AG04450 (cell line): ENCODE measurements at regions of chr6 and their contacts with region 1.

Region 1: GRCh38 chr6:87322304-87323212 is at the start of gene SMIM8:
- DNase-seq: peak; percentile 18
- H3K4me3 ChIP-seq: peak within 1 kb of the TSS; percentile 96
- H3K27ac ChIP-seq: no peak within 1 kb of the TSS
- H3K27me3 ChIP-seq: no peaks in the 10 kb centered on the region
- CTCF ChIP-seq: peak; percentile 96
- polyA plus RNA-seq, gene SMIM8: 6.4 and 9.1 TPM in 2 replicates

Region 2: GRCh38 chr6:87115402-87116135 is 207.0 kb before region 1 on chr6:
- CTCF ChIA-PET with region 1: no interaction called
- POLR2A ChIA-PET with region 1: no interaction called
- DNase-seq: no peak
- H3K4me3 ChIP-seq: no peak overlapping the region
- H3K27ac ChIP-seq: no peak overlapping the region
- H3K27me3 ChIP-seq: no peaks in the 10 kb centered on the region
- CTCF ChIP-seq: no peak

Region 3: DNA sequence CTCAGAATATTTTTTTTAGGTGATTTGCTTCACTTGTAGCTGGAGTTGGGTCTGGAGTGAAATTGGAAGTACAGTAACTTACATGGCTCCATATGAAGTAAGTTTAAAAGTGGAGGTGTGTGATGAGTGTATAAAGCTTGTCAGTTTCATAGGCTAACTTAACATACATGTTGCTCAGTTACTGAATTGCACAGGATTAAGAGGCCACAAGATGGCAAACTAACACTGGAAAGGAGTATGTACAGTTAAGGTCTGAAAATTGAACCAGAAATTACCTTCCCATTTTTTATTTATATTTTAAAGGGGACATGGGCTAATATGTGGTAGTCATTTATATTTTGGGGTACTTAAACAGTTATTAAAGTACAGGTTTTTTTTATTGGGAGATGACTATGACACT is 45.4 kb before region 1 on chr6:
- CTCF ChIA-PET with region 1: interaction called, 12 read pairs
- POLR2A ChIA-PET with region 1: no interaction called
- DNase-seq: no peak
- H3K4me3 ChIP-seq: no peak overlapping the region
- H3K27ac ChIP-seq: no peak overlapping the region
- H3K27me3 ChIP-seq: no peaks in the 10 kb centered on the region
- CTCF ChIP-seq: peak; percentile 23

Region 4: DNA sequence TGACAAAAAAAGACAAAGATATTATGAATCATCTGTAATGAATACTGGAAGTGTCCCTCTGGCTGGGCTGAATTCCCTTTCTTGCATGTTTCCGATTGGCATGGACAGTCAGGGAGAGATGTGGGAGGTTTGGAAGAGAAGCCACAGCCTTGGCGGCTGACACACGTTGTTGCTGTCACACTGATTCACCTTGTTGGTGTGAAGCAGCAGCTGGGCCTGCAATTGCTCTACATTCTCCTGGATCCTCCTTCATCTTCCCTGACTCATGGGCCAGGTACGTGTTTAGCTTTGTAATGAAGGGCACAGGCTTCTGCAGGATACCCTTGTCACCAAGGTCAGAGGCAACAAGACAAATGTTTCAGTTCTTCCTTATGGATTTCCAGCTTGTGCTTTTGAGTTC is 13.6 kb before region 1 on chr6:
- CTCF ChIA-PET with region 1: interaction called, 33 read pairs
- POLR2A ChIA-PET with region 1: no interaction called
- DNase-seq: no peak
- H3K4me3 ChIP-seq: no peak overlapping the region
- H3K27ac ChIP-seq: no peak overlapping the region
- H3K27me3 ChIP-seq: peaks cover 3% of the 10 kb centered on the region
- CTCF ChIP-seq: no peak

Region 5: GRCh38 chr6:87333591-87334181 is 11.1 kb after region 1 on chr6:
- CTCF ChIA-PET with region 1: interaction called, 17 read pairs
- POLR2A ChIA-PET with region 1: no interaction called
- DNase-seq: no peak
- H3K4me3 ChIP-seq: no peak overlapping the region
- H3K27ac ChIP-seq: no peak overlapping the region
- H3K27me3 ChIP-seq: no peaks in the 10 kb centered on the region
- CTCF ChIP-seq: no peak

Region 6: GRCh38 chr6:87341899-87342298 is 19.3 kb after region 1 on chr6:
- CTCF ChIA-PET with region 1: interaction called, 12 read pairs
- POLR2A ChIA-PET with region 1: no interaction called
- DNase-seq: no peak
- H3K4me3 ChIP-seq: no peak overlapping the region
- H3K27ac ChIP-seq: no peak overlapping the region
- H3K27me3 ChIP-seq: no peaks in the 10 kb centered on the region
- CTCF ChIP-seq: no peak

Region 7: GRCh38 chr6:87375320-87375719 is 52.8 kb after region 1 on chr6:
- CTCF ChIA-PET with region 1: no interaction called
- POLR2A ChIA-PET with region 1: no interaction called
- DNase-seq: no peak
- H3K4me3 ChIP-seq: no peak overlapping the region
- H3K27ac ChIP-seq: no peak overlapping the region
- H3K27me3 ChIP-seq: no peaks in the 10 kb centered on the region
- CTCF ChIP-seq: no peak

Region 8: GRCh38 chr6:87522686-87523085 is 200.1 kb after region 1 on chr6:
- CTCF ChIA-PET with region 1: no interaction called
- POLR2A ChIA-PET with region 1: no interaction called
- DNase-seq: peak; percentile 33
- H3K4me3 ChIP-seq: no peak overlapping the region
- H3K27ac ChIP-seq: peak overlapping the region; percentile 22
- H3K27me3 ChIP-seq: no peaks in the 10 kb centered on the region
- CTCF ChIP-seq: no peak

Region 9: GRCh38 chr6:87965806-87966205 is 643.2 kb after region 1 on chr6:
- CTCF ChIA-PET with region 1: no interaction called
- POLR2A ChIA-PET with region 1: no interaction called
- DNase-seq: no peak
- H3K4me3 ChIP-seq: no peak overlapping the region
- H3K27ac ChIP-seq: no peak overlapping the region
- H3K27me3 ChIP-seq: peaks cover 14% of the 10 kb centered on the region
- CTCF ChIP-seq: no peak